Breast epithelium (tissue), 4 donors: ENCODE measurements at regions of chr3 and their contacts with region 1.

Region 1: GRCh38 chr3:172153335-172153861 is 114.0 kb downstream of the FNDC3B start:
- DNase-seq: peak; percentile 82 to 96
- H3K4me3 ChIP-seq: peak overlapping the region in 2 of 3 donors; percentile 6 to 31
- H3K27ac ChIP-seq: peak overlapping the region; percentile 91 to 96
- H3K4me1 ChIP-seq: peaks cover 13 to 38% of the 10 kb centered on the region in 2 donors
- H3K27me3 ChIP-seq: no peaks in the 10 kb centered on the region
- CTCF ChIP-seq: no peak
- POLR2A ChIP-seq: no peak

Region 2: GRCh38 chr3:172039436-172040077 is 113.8 kb before region 1 on chr3 and contains the start of gene FNDC3B:
- intact Hi-C with region 1: loop called (anchors 10 kb)
- DNase-seq: peak; percentile 91
- H3K4me3 ChIP-seq: peak within 1 kb of the TSS; percentile 84 to 99 (median 98)
- H3K27ac ChIP-seq: peak within 1 kb of the TSS; percentile 96 to 100
- H3K4me1 ChIP-seq: no peaks in the 10 kb centered on the region
- H3K27me3 ChIP-seq: no peaks in the 10 kb centered on the region
- CTCF ChIP-seq: no peak
- POLR2A ChIP-seq: peak; percentile 85
- total RNA-seq, gene FNDC3B: 131 to 172 (median 149) TPM

Region 3: DNA sequence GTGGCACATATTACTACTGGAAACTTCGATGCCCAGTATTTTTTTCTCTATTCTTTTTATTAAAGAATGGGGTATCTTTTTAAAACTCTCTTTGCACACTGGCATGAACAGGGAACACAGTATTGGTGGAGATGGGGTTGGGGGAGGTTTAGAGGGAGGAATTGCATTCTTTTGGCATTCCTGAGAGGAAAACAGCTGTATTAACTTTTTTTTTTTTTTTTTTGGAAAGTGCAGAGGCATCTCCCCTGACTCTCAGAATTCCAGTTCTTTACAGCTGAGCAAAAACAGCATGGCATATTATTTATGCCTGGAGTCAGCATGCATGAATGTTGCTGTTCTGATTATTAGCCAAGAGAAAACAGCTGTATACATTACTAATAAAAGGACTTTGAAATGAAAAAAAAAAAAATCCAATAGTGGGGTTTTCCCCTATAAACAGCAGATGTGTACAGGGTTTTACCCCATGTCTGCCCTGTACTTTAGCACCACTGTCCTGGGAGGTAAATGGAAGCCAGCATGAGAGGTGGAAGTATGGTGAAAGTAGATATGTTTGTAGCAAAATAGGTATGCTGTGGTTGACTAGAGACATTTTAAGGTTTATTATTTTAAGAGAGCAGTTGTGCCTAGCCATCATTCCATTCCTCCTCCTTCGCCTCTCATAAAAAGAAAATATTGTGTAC is 18.1 kb after region 1 on chr3:
- intact Hi-C with region 1: no loop called
- DNase-seq: no peak
- H3K4me3 ChIP-seq: no peak overlapping the region
- H3K27ac ChIP-seq: no peak overlapping the region
- H3K4me1 ChIP-seq: peaks cover 0 to 15% of the 10 kb centered on the region in 2 donors
- H3K27me3 ChIP-seq: no peaks in the 10 kb centered on the region
- CTCF ChIP-seq: no peak
- POLR2A ChIP-seq: no peak

Region 4: GRCh38 chr3:172181932-172182586 is 28.7 kb after region 1 on chr3:
- intact Hi-C with region 1: no loop called
- DNase-seq: no peak
- H3K4me3 ChIP-seq: no peak overlapping the region
- H3K27ac ChIP-seq: peak overlapping the region; percentile 21 to 41
- H3K4me1 ChIP-seq: peaks cover 0 to 7% of the 10 kb centered on the region in 2 donors
- H3K27me3 ChIP-seq: no peaks in the 10 kb centered on the region
- CTCF ChIP-seq: no peak
- POLR2A ChIP-seq: no peak

Region 5: DNA sequence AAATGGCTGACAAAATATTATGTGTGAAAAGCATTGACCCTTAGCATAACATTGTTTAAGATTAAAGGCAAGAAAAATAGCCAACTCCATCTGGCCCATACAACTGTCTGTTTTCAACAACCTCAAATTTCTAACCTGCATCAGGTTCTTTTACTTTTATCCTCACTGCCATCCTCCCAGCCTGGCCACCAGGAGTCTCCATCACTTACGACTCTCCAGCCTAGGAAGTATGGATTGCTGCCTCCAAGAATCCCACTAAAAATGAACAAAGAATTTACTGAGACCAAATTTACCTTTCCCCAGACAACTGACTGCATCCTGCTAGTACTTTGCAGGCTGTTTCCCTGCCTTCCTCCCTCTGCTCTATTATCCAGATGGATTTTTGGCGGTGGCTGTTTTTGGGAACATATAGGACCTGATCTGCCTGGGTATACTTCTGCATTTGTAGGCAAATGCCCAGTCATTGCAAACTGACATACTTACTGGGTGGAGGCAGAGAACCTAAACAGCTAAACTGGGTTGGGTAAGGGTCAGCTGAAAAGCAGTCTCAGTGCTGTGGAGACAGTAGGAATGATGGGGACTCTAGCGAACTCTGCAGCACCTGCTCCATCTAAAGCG is 150.7 kb after region 1 on chr3:
- intact Hi-C with region 1: loop called (anchors 5 kb)
- DNase-seq: no peak
- H3K4me3 ChIP-seq: no peak overlapping the region
- H3K27ac ChIP-seq: no peak overlapping the region
- H3K4me1 ChIP-seq: no peaks in the 10 kb centered on the region
- H3K27me3 ChIP-seq: no peaks in the 10 kb centered on the region
- CTCF ChIP-seq: no peak
- POLR2A ChIP-seq: no peak